ENCODE measurements at regions of chr1 and their contacts with region 1.

Region 1: GRCh38 chr1:109548321-109549267 is at the start of gene GNAI3:
- DNase-seq: peak; percentile 93
- ATAC-seq: peak; percentile 90
- H3K4me3 Mint-ChIP-seq: peak within 1 kb of the TSS; percentile 100
- H3K27ac Mint-ChIP-seq: peak within 1 kb of the TSS; percentile 99
- H3K4me1 Mint-ChIP-seq: peaks cover 56% of the 10 kb centered on the region
- H3K27me3 Mint-ChIP-seq: no peaks in the 10 kb centered on the region
- CTCF ChIP-seq: no peak
- total RNA-seq, gene GNAI3: 7.5 and 8.4 TPM in 2 replicates

Region 2: DNA sequence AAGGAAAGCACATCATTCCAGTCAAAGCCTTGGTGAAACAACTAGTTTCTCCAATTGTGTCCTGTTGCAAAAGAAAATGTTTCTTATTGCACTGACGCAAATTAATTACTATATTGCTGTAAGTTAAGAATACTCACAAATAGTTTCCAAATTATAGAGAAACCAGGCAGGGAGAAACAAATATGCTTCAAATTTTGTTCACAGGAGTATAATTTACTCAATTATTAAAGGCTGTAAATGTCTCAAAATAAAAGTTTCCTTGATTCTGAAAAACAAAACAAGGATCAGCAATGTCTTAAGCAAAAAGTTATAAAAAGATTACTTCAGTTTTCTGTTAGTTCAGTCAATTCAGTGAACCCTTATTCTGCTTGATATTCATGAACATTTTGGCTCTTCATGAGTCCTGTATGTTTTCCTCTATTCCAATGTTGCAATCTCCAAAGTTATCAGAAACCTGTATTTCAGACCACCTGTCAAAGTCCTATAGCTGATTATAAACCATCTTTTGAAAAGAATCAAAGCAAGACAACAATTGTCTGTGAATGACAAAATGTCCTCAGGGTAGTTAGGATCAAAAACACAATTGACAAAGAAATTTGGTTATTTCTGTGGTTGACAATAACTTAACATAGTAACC is 94.0 kb before region 1 on chr1:
- CTCF ChIA-PET with region 1: no interaction called
- POLR2A ChIA-PET with region 1: no interaction called
- intact Hi-C with region 1: no loop called
- DNase-seq: no peak
- ATAC-seq: no peak
- H3K4me3 Mint-ChIP-seq: no peak overlapping the region
- H3K27ac Mint-ChIP-seq: no peak overlapping the region
- H3K4me1 Mint-ChIP-seq: no peaks in the 10 kb centered on the region
- H3K27me3 Mint-ChIP-seq: peaks cover 28% of the 10 kb centered on the region
- CTCF ChIP-seq: no peak

Region 3: DNA sequence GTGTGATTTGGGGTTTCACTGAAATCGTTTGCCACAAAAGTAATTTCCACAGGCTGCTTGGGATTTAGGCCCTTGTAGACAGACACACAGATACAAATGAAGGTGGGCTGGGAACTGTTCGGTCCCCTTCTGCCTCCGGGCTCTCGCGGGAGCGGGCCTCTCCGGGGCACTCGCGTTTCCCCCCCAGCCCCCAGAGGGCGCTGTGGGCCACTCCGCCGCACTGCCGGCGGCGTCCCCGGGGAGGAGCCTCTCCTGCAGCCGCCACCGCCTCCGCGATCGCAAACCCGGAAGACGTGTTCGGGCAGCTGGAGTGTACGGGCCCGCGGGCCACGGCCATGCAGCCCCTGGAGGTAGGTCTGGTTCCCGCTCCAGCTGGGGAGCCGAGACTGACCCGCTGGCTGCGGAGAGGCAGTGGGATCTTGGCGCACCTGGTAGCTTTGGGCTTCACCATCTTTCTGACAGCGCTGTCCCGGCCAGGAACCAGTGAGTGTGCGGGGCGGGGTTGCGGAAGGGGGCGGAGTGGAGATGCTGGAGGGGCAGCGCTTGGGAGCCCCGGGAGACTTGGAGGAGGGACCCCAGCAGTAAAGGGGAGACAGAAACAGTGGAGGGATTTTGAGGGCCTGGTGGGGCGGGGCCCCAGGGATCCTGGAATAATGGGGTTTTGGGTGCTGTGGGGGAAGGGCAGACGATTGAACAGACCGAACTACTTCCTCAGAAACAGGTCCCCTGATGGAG is 54.6 kb before region 1 on chr1 and contains the start of gene CYB561D1:
- CTCF ChIA-PET with region 1: interaction called, 5 read pairs
- POLR2A ChIA-PET with region 1: interaction called, 11 read pairs
- intact Hi-C with region 1: no loop called
- DNase-seq: peak; percentile 95
- ATAC-seq: peak; percentile 89
- H3K4me3 Mint-ChIP-seq: peak within 1 kb of the TSS; percentile 98
- H3K27ac Mint-ChIP-seq: peak within 1 kb of the TSS; percentile 91
- H3K4me1 Mint-ChIP-seq: peaks cover 43% of the 10 kb centered on the region
- H3K27me3 Mint-ChIP-seq: no peaks in the 10 kb centered on the region
- CTCF ChIP-seq: peak; percentile 81
- total RNA-seq, gene CYB561D1: 17.1 and 18.1 TPM in 2 replicates

Region 4: DNA sequence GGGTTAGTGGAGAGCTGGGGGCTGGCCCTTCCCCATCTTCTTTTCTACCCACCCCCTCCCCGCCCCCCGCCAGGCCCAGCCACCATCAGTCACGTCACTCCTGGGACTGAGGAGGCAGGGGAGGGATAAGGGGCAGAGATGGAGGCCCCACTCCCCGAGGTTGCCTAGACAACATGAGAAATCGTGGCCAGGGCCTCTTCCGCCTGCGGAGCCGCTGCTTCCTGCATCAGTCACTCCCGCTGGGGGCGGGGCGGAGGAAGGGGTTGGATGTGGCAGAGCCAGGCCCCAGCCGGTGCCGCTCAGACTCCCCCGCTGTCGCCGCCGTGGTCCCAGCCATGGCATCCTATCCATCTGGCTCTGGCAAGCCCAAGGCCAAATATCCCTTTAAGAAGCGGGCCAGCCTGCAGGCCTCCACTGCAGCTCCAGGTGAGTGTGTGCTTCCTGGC is 72.3 kb after region 1 on chr1:
- CTCF ChIA-PET with region 1: interaction called, 7 read pairs
- POLR2A ChIA-PET with region 1: interaction called, 35 read pairs
- intact Hi-C with region 1: loop called (anchors 1 kb)
- DNase-seq: peak; percentile 80
- ATAC-seq: peak; percentile 67
- H3K4me3 Mint-ChIP-seq: peak overlapping the region; percentile 90
- H3K27ac Mint-ChIP-seq: peak overlapping the region; percentile 93
- H3K4me1 Mint-ChIP-seq: peaks cover 78% of the 10 kb centered on the region
- H3K27me3 Mint-ChIP-seq: no peaks in the 10 kb centered on the region
- CTCF ChIP-seq: no peak

Region 5: DNA sequence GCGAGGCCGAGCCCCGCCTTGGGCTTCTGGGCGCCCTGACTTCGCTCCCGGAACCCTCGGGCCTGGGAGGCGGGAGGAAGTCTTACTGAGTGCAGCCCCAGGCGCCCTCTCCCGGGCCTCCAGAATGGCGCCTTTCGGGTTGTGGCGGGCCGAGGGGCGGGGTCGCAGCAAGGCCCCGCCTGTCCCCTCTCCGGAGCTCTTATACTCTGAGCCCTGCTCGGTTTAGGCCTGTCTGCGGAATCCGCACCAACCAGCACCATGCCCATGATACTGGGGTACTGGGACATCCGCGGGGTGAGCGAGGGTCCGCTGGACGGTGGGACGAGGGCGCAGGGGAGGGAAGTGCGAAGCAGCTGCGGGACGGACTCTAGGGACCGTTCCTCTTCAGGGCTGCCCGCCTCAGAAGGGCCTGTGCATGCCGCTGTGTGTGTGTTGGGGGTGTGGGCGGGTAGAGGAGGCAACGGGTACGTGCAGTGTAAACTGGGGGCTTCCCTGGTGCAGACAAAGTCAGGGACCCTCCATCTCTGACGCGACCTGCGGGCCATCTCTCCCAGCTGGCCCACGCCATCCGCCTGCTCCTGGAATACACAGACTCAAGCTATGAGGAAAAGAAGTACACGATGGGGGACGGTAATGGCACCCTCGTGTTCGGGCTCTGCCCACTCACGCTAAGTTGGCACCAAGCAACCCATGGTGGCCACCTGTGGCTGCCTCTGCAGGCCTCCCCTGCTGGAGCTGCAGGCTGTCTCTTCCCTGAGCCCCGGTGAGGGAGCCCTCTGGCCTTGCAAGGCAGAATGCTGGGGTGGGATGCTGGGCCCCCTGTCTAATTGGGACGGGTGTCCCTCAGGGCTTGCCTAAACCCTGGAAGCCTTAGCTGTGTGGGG is 139.3 kb after region 1 on chr1 and contains the start of gene GSTM1:
- CTCF ChIA-PET with region 1: interaction called, 5 read pairs
- POLR2A ChIA-PET with region 1: interaction called, 7 read pairs
- intact Hi-C with region 1: loop called (anchors 1 kb)
- DNase-seq: peak; percentile 62
- ATAC-seq: peak; percentile 98
- H3K4me3 Mint-ChIP-seq: peak within 1 kb of the TSS; percentile 89
- H3K27ac Mint-ChIP-seq: peak within 1 kb of the TSS; percentile 87
- H3K4me1 Mint-ChIP-seq: peaks cover 11% of the 10 kb centered on the region
- H3K27me3 Mint-ChIP-seq: no peaks in the 10 kb centered on the region
- CTCF ChIP-seq: no peak
- total RNA-seq, gene GSTM1: 22.2 and 22.4 TPM in 2 replicates

Region 6: DNA sequence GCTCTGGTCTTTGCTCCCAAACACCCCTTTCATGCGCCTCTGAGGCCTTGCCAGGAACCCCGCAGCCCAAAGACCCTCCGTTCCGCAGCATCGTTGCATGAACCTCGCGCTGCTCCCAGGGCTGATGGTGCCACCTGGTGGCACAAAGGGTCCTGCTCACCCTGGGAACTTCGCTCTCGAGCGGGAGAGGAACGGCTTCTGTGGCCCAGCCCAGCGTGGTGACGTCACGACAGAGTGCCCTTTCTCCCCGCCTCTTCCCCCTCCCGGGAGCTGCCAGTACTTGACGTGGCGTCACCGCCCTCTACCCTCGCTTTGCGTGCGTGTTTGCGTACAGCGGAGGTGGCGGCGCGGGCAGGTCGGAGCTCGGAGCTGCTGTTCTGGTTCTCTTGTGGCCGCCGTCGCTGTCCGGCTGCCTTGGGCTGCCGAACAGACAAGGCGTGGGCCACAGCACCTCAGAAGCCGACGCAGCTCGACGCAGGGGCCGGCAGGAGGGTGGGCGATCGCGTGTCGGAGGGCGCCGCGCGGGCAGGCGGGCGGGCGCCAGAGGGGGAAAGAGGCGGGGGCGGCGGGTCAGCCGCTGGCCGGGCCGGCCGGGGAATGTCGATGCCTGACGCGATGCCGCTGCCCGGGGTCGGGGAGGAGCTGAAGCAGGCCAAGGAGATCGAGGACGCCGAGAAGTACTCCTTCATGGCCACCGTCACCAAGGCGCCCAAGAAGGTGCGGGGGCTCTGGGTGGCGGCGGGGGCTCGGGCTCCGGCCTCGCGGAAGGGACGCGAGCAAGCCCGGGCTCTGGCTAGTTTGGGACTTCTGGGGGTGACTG is 436.1 kb after region 1 on chr1 and contains the start of gene AHCYL1:
- CTCF ChIA-PET with region 1: interaction called, 34 read pairs
- POLR2A ChIA-PET with region 1: interaction called, 27 read pairs
- intact Hi-C with region 1: loop called (anchors 1 kb)
- DNase-seq: peak; percentile 97
- ATAC-seq: peak; percentile 99
- H3K4me3 Mint-ChIP-seq: peak within 1 kb of the TSS; percentile 98
- H3K27ac Mint-ChIP-seq: peak within 1 kb of the TSS; percentile 93
- H3K4me1 Mint-ChIP-seq: peaks cover 37% of the 10 kb centered on the region
- H3K27me3 Mint-ChIP-seq: peaks cover 5% of the 10 kb centered on the region
- CTCF ChIP-seq: peak; percentile 56
- total RNA-seq, gene AHCYL1: 40.5 and 41.6 TPM in 2 replicates

Region 7: GRCh38 chr1:110780600-110781484 is 1232.2 kb after region 1 on chr1:
- CTCF ChIA-PET with region 1: no interaction called
- POLR2A ChIA-PET with region 1: no interaction called
- intact Hi-C with region 1: no loop called
- DNase-seq: peak; percentile 48
- ATAC-seq: peak; percentile 85
- H3K4me3 Mint-ChIP-seq: peak overlapping the region; percentile 47
- H3K27ac Mint-ChIP-seq: no peak overlapping the region
- H3K4me1 Mint-ChIP-seq: peaks cover 43% of the 10 kb centered on the region
- H3K27me3 Mint-ChIP-seq: no peaks in the 10 kb centered on the region
- CTCF ChIP-seq: no peak